Mammary epithelial cell (primary cell): ENCODE measurements at regions of chr2 and their contacts with region 1.

Region 1: DNA sequence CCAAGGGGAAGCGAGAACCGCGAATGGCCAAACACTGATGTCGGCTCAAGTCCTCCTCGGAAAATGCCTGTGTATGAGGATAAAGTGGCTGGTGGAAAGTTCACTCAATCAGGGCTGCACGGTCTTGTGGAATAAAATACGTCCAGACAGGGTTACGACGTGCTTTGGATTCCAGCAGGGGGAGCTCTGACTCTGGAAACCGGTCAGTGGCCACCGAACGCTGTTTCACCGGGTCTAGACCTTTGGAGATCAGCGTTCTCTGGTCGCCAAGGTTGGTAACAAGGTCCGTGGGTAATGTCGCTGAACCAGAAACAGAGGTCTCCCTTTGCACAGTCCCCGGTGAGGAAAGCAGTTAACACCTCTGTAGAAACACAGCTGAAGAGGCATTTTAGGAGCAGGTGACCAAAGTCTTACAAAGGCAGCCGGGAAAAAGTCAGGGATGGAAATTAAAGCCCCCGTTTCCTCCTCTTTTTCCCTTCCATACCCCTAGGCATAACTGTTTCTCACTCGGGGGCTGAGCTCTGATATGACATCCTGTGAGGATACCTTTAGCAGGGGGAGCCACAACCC is 47.8 kb downstream of the CDCA7 start:
- DNase-seq: peak; percentile 65
- H3K4me3 ChIP-seq: peak overlapping the region; percentile 23 to 33 (median 26)
- H3K27ac ChIP-seq: no peak overlapping the region
- H3K4me1 ChIP-seq: peaks cover 17% of the 10 kb centered on the region
- H3K27me3 ChIP-seq: no peaks in the 10 kb centered on the region
- CTCF ChIP-seq: peak; percentile 78 to 92

Region 2: DNA sequence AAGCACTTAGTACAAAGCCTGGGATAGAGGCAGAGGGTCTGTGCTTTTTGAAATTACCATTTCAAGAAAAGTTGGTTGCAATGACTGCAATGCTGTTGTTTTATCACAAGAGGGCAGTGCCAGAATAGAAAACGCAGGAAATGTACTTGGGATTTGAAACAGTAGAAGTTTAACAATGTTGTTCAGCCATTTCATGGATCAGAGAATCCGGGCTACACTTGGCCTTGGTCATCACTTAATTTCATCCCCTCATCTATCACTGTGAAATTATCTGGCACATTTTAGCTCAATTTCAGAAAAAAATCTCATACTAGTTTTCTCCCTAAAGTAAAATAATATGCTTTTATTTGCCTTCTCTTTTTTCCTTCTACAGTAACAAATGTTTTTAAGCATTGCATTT is 596.0 kb before region 1 on chr2:
- CTCF ChIA-PET with region 1: no interaction called
- dilution Hi-C with region 1: no loop called
- in situ Hi-C with region 1: loop called in 1 of 2 experiments (anchors 25 kb)
- intact Hi-C with region 1: loop called (anchors 1 kb)
- DNase-seq: no peak
- H3K4me3 ChIP-seq: no peak overlapping the region
- H3K27ac ChIP-seq: no peak overlapping the region
- H3K4me1 ChIP-seq: peaks cover 9% of the 10 kb centered on the region
- H3K27me3 ChIP-seq: no peaks in the 10 kb centered on the region
- CTCF ChIP-seq: peak; percentile 90 to 96

Region 3: DNA sequence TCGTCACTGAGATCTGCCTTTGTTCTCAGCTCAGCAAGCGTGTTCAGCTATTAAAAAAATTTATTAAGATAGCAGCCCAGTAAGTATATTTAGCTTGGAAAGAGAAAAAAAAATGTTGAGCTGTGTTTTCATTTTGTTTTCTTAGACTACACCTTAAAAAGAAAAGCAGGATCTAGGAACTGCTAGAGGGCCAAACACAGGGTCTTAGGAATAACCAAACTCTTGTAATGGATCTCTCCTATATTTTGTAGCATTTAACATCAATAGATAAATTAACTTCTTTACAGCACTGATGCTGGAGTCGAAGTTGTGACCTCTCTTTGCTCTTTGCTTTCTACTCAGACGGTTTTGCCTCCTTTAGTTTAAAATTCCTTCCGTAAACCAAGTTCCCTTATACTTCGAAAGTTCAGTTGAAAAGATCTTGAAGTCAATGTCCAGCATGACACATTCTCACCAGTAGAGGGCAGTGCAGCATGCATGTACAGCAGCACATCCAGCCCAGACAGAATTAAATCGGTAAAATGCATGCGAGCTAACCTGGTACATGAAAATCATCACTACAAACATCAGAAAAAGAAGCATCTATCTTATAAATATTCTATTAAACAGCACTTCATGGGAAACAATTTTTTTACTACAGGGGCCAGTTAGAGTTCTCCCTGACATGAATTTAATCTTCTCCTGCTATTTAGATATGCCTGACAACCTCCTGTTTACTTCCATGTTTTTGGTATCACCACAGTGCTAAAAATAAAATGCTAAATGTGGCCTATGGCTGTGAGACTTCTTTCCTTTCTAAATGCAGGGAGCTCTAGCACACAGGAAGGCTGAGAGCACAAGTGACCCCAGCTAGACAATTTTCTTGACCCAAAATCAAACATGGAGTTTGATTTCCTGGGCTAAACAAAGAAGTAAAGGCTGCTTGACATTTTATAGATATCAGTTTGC is 375.0 kb before region 1 on chr2:
- CTCF ChIA-PET with region 1: no interaction called
- dilution Hi-C with region 1: no loop called
- in situ Hi-C with region 1: no loop called
- intact Hi-C with region 1: loop called (anchors 1 kb)
- DNase-seq: peak; percentile 73
- H3K4me3 ChIP-seq: no peak overlapping the region
- H3K27ac ChIP-seq: peak overlapping the region; percentile 27
- H3K4me1 ChIP-seq: peaks cover 20% of the 10 kb centered on the region
- H3K27me3 ChIP-seq: no peaks in the 10 kb centered on the region
- CTCF ChIP-seq: peak; percentile 93

Region 4: GRCh38 chr2:173286153-173286809 is 116.2 kb before region 1 on chr2:
- CTCF ChIA-PET with region 1: no interaction called
- dilution Hi-C with region 1: no loop called
- in situ Hi-C with region 1: no loop called
- intact Hi-C with region 1: loop called (anchors 5 kb)
- DNase-seq: no peak
- H3K4me3 ChIP-seq: no peak overlapping the region
- H3K27ac ChIP-seq: no peak overlapping the region
- H3K4me1 ChIP-seq: peaks cover 9% of the 10 kb centered on the region
- H3K27me3 ChIP-seq: no peaks in the 10 kb centered on the region
- CTCF ChIP-seq: no peak

Region 5: DNA sequence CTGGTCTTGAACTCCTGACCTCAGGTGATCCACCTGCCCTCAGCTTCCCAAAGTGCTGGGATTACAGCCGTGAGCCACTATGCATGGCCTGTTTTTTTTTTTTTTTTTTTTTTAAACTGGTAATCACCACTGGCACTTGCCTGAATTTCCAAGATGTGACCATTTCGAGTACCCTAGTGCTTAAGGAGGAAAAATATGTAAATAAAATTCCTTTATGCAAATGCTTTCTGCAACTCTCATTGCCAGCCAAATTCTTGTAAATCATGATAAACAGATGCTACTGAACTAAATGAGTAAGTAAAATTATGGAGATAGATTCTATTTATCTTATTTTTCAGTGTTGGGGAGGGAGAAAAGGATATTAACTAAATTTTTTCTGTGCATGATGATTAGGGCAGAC is 29.2 kb before region 1 on chr2:
- CTCF ChIA-PET with region 1: no interaction called
- dilution Hi-C with region 1: no loop called
- in situ Hi-C with region 1: no loop called
- intact Hi-C with region 1: no loop called
- DNase-seq: no peak
- H3K4me3 ChIP-seq: no peak overlapping the region
- H3K27ac ChIP-seq: no peak overlapping the region
- H3K4me1 ChIP-seq: no peaks in the 10 kb centered on the region
- H3K27me3 ChIP-seq: no peaks in the 10 kb centered on the region
- CTCF ChIP-seq: no peak

Region 6: GRCh38 chr2:173571021-173571882 is 168.8 kb after region 1 on chr2:
- CTCF ChIA-PET with region 1: no interaction called
- dilution Hi-C with region 1: no loop called
- in situ Hi-C with region 1: no loop called
- intact Hi-C with region 1: loop called (anchors 1 kb)
- DNase-seq: peak; percentile 30
- H3K4me3 ChIP-seq: no peak overlapping the region
- H3K27ac ChIP-seq: no peak overlapping the region
- H3K4me1 ChIP-seq: peaks cover 28% of the 10 kb centered on the region
- H3K27me3 ChIP-seq: no peaks in the 10 kb centered on the region
- CTCF ChIP-seq: peak; percentile 31 to 52

Region 7: DNA sequence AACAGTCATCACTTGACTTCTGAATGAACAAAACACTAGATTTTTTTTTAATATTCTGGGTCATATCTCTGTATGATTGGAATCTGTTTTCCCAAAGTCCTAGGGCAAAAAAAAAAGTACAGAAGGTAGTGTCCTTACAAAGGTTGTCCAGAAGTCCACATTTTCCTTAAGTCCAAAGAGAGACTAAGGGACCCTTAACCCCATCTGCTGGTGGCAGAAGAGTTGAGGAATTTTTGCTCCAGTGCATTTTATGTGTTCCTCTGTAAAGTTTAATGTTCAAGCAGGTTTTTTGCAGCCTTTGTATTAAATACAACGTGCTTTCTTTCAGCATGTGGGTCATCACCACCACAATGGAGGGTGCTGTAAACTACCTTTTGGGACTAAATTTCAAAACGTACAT is 346.8 kb after region 1 on chr2:
- CTCF ChIA-PET with region 1: no interaction called
- dilution Hi-C with region 1: no loop called
- in situ Hi-C with region 1: no loop called
- intact Hi-C with region 1: loop called (anchors 1 kb)
- DNase-seq: peak; percentile 6
- H3K4me3 ChIP-seq: no peak overlapping the region
- H3K27ac ChIP-seq: no peak overlapping the region
- H3K4me1 ChIP-seq: no peaks in the 10 kb centered on the region
- H3K27me3 ChIP-seq: no peaks in the 10 kb centered on the region
- CTCF ChIP-seq: peak in 1 of 2 donors; percentile 52